ENCODE measurements at regions of chr16 and their contacts with region 1.

Region 1: DNA sequence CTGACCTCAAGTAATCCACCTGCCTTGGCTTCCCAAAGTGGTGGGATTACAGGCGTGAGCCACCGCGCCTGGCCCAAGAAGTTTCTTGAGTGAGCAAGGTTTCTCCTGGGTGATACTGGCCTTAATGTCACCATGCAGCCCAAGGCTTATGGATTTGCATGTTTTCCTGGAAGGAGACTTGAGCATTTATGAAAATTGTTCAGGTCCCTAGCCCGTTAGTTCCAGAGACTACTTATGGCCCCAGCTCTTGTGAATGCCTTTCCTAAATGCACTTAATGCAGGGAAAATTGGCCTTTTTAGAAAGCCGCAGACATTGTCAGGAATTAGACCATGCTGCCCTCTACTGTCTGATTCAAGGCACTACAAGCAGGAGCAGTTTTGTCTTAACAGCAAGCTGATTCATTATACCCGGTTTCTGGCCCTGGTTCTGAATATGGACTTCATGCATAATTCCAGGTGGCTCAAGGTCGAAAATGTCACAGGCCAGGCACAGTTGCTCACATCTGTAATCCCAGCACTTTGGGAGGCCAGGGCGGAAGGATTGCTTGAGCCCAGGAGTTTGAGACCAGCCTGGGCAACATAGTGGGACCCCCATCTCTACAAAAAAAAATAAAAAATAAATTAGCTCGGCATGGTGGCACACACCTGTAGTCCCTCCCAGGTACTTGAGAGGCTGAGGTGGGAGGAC is 91.3 kb downstream of the SNX29 start:
- DNase-seq: peak; percentile 79 to 81
- ATAC-seq: peak; percentile 85 to 93
- H3K4me3 ChIP-seq: no peak overlapping the region
- H3K27ac ChIP-seq: no peak overlapping the region
- H3K4me1 ChIP-seq: no peaks in the 10 kb centered on the region
- CTCF ChIP-seq: peak; percentile 92
- EP300 ChIP-seq: no peak
- POLR2A ChIP-seq: no peak
- RAD21 ChIP-seq: peak; percentile 95 to 97

Region 2: DNA sequence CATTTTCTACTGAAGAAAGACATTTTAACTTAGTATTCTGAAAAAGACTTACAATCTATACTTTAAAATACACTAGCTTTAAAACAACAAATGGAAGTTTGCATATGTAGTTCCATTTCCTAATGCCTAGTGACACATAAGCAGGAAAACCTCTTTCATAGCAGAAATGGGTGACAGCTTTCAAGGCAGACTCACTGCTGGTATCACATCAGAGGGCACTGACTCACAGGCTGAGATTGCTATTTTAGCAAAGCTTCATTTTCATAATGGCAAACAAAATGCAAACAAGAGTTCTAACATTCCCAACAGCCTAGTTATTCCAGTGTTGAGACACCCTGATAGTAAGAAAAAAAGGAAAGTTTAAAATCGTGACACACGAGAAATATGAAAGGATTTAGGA is 171.1 kb before region 1 on chr16:
- CTCF ChIA-PET with region 1: interaction called, 10 read pairs
- POLR2A ChIA-PET with region 1: no interaction called
- DNase-seq: no peak
- ATAC-seq: no peak
- H3K4me3 ChIP-seq: no peak overlapping the region
- H3K27ac ChIP-seq: no peak overlapping the region
- H3K4me1 ChIP-seq: peaks cover 7% of the 10 kb centered on the region; the same call in 1 of the 3 replicates
- CTCF ChIP-seq: no peak
- EP300 ChIP-seq: no peak
- POLR2A ChIP-seq: no peak
- RAD21 ChIP-seq: no peak

Region 3: GRCh38 chr16:11955713-11956123 is 112.1 kb before region 1 on chr16:
- CTCF ChIA-PET with region 1: interaction called, 14 read pairs
- POLR2A ChIA-PET with region 1: no interaction called
- DNase-seq: peak in 1 of 2 experiments; percentile 12
- ATAC-seq: peak; percentile 43 to 54; a peak in 5 of 6 replicates
- H3K4me3 ChIP-seq: no peak overlapping the region
- H3K27ac ChIP-seq: peak overlapping the region in 1 of 2 experiments; percentile 27; a peak in 1 of 6 replicates
- H3K4me1 ChIP-seq: 0 out of 3 replicates have a peak, but pooled peaks cover 3% of the 10 kb centered on the region
- CTCF ChIP-seq: no peak
- EP300 ChIP-seq: no peak
- POLR2A ChIP-seq: no peak
- RAD21 ChIP-seq: no peak

Region 4: DNA sequence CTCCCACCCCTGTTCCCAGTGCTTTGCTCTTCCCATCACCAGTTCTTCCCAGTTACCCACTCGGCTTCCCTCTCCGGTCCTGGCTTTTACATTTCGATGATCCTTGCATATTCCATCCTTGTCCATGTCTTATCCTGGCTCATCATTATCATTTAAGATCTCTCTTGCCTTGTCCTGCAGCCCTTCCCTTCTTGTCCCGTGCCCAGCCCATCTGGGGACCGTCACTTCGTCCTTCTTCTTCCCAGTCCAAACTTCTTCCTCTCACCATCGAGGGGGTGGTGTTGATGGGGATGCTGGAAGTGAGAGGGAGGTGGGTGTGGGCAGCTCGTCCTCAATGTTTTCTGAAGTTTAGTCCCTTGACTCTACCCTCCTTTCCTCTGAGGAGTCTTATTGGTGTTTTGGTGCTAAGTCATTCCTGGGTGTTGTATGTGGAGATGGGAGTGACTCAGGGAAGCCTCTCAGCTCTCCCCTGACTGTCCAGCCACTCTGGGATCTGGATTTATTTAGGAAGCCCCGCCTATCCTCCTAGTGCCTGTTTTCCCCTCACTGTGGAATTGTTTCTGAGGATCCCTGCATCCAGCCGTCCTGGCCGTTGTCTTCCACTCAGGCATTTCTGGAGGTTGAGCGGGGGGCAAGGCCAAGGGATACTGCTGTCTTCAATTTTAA is 90.3 kb before region 1 on chr16:
- CTCF ChIA-PET with region 1: interaction called, 61 read pairs
- POLR2A ChIA-PET with region 1: interaction called, 6 read pairs
- DNase-seq: peak in 1 of 2 experiments; percentile 51
- ATAC-seq: peak; percentile 70 to 73
- H3K4me3 ChIP-seq: peak overlapping the region; percentile 76
- H3K27ac ChIP-seq: peak overlapping the region; percentile 77 to 95; a peak in 5 of 6 replicates
- H3K4me1 ChIP-seq: peaks cover 8% of the 10 kb centered on the region
- CTCF ChIP-seq: no peak
- EP300 ChIP-seq: no peak
- POLR2A ChIP-seq: no peak
- RAD21 ChIP-seq: no peak

Region 5: GRCh38 chr16:12057266-12057665 is 10.6 kb before region 1 on chr16:
- CTCF ChIA-PET with region 1: interaction called, 25 read pairs
- POLR2A ChIA-PET with region 1: no interaction called
- DNase-seq: no peak
- ATAC-seq: peak in 1 of 2 experiments; percentile 37; a peak in 1 of 6 replicates
- H3K4me3 ChIP-seq: no peak overlapping the region
- H3K27ac ChIP-seq: no peak overlapping the region
- H3K4me1 ChIP-seq: no peaks in the 10 kb centered on the region
- CTCF ChIP-seq: no peak
- EP300 ChIP-seq: no peak
- POLR2A ChIP-seq: no peak
- RAD21 ChIP-seq: no peak

Measured in A549 (cell line).